PC-3 (cell line): ENCODE measurements at regions of chr7 and their contacts with region 1.

Region 1: GRCh38 chr7:16004702-16005101 is 318.2 kb upstream of the MEOX2 start:
- DNase-seq: no peak
- ATAC-seq: no peak
- H3K4me3 ChIP-seq: no peak overlapping the region
- H3K27ac ChIP-seq: no peak overlapping the region
- H3K4me1 ChIP-seq: no peaks in the 10 kb centered on the region
- H3K27me3 ChIP-seq: no peaks in the 10 kb centered on the region
- CTCF ChIP-seq: no peak

Region 2: DNA sequence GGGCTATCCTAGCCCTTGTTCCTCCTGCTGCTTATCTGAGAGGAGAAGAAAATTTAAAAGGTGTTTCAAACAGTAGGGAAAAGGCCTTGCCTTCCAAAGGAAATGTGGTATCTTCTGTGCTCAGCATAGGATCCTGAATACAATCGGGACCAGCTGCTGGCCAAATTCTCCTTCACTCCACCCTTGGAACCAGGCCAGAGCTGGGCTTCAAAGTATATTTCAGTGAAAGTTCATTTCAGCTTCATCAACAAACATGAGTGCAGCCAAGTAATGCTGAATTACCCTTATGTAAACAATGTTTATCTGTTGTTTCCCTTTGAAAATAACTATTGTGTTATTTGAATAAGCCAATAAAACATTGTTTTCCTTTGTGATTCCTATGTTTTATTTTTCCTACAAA is 171.7 kb before region 1 on chr7:
- CTCF ChIA-PET with region 1: no interaction called
- POLR2A ChIA-PET with region 1: interaction called, 10 read pairs
- intact Hi-C with region 1: no loop called
- DNase-seq: peak; percentile 19
- ATAC-seq: peak; percentile 75
- H3K4me3 ChIP-seq: no peak overlapping the region
- H3K27ac ChIP-seq: no peak overlapping the region
- H3K4me1 ChIP-seq: peaks cover 8% of the 10 kb centered on the region; the same call in 1 of the 2 replicates
- H3K27me3 ChIP-seq: no peaks in the 10 kb centered on the region
- CTCF ChIP-seq: no peak

Region 3: GRCh38 chr7:16528520-16528919 is 523.8 kb after region 1 on chr7:
- CTCF ChIA-PET with region 1: no interaction called
- POLR2A ChIA-PET with region 1: interaction called, 11 read pairs
- intact Hi-C with region 1: no loop called
- DNase-seq: no peak
- ATAC-seq: no peak
- H3K4me3 ChIP-seq: no peak overlapping the region
- H3K27ac ChIP-seq: no peak overlapping the region
- H3K4me1 ChIP-seq: peaks cover 8% of the 10 kb centered on the region
- H3K27me3 ChIP-seq: no peaks in the 10 kb centered on the region
- CTCF ChIP-seq: no peak